ENCODE measurements at regions of chr21 and their contacts with region 1.

Region 1: GRCh38 chr21:35342440-35342839 is 293.3 kb upstream of the RUNX1 start:
- DNase-seq: peak; percentile 66
- H3K4me3 Mint-ChIP-seq: peak overlapping the region; percentile 62
- H3K27ac Mint-ChIP-seq: peak overlapping the region; percentile 98
- H3K4me1 Mint-ChIP-seq: peaks cover 52% of the 10 kb centered on the region
- H3K27me3 Mint-ChIP-seq: no peaks in the 10 kb centered on the region

Region 2: GRCh38 chr21:34807146-34807880 is 535.1 kb before region 1 on chr21:
- CTCF ChIA-PET with region 1: no interaction called
- POLR2A ChIA-PET with region 1: no interaction called
- intact Hi-C with region 1: loop called (anchors 5 kb)
- DNase-seq: peak; percentile 85
- H3K4me3 Mint-ChIP-seq: peak overlapping the region; percentile 57
- H3K27ac Mint-ChIP-seq: peak overlapping the region; percentile 89
- H3K4me1 Mint-ChIP-seq: peaks cover 89% of the 10 kb centered on the region
- H3K27me3 Mint-ChIP-seq: no peaks in the 10 kb centered on the region

Region 3: GRCh38 chr21:35084869-35085268 is 257.6 kb before region 1 on chr21:
- CTCF ChIA-PET with region 1: no interaction called
- POLR2A ChIA-PET with region 1: no interaction called
- intact Hi-C with region 1: loop called (anchors 1 kb)
- DNase-seq: no peak
- H3K4me3 Mint-ChIP-seq: no peak overlapping the region
- H3K27ac Mint-ChIP-seq: no peak overlapping the region
- H3K4me1 Mint-ChIP-seq: peaks cover 39% of the 10 kb centered on the region
- H3K27me3 Mint-ChIP-seq: no peaks in the 10 kb centered on the region

Region 4: GRCh38 chr21:35150562-35151226 is 191.7 kb before region 1 on chr21:
- CTCF ChIA-PET with region 1: no interaction called
- POLR2A ChIA-PET with region 1: interaction called, 3 read pairs
- intact Hi-C with region 1: loop called (anchors 2 kb)
- DNase-seq: no peak
- H3K4me3 Mint-ChIP-seq: peak overlapping the region; percentile 6
- H3K27ac Mint-ChIP-seq: peak overlapping the region; percentile 90
- H3K4me1 Mint-ChIP-seq: peaks cover 51% of the 10 kb centered on the region
- H3K27me3 Mint-ChIP-seq: peaks cover 1% of the 10 kb centered on the region

Region 5: GRCh38 chr21:35244514-35244913 is 97.9 kb before region 1 on chr21:
- CTCF ChIA-PET with region 1: no interaction called
- POLR2A ChIA-PET with region 1: no interaction called
- intact Hi-C with region 1: no loop called
- DNase-seq: no peak
- H3K4me3 Mint-ChIP-seq: no peak overlapping the region
- H3K27ac Mint-ChIP-seq: no peak overlapping the region
- H3K4me1 Mint-ChIP-seq: no peaks in the 10 kb centered on the region
- H3K27me3 Mint-ChIP-seq: peaks cover 2% of the 10 kb centered on the region

Region 6: GRCh38 chr21:35358008-35358407 is 15.6 kb after region 1 on chr21:
- CTCF ChIA-PET with region 1: interaction called, 4 read pairs
- POLR2A ChIA-PET with region 1: no interaction called
- intact Hi-C with region 1: loop called (anchors 1 kb)
- DNase-seq: no peak
- H3K4me3 Mint-ChIP-seq: no peak overlapping the region
- H3K27ac Mint-ChIP-seq: peak overlapping the region; percentile 79
- H3K4me1 Mint-ChIP-seq: peaks cover 11% of the 10 kb centered on the region
- H3K27me3 Mint-ChIP-seq: no peaks in the 10 kb centered on the region

Region 7: DNA sequence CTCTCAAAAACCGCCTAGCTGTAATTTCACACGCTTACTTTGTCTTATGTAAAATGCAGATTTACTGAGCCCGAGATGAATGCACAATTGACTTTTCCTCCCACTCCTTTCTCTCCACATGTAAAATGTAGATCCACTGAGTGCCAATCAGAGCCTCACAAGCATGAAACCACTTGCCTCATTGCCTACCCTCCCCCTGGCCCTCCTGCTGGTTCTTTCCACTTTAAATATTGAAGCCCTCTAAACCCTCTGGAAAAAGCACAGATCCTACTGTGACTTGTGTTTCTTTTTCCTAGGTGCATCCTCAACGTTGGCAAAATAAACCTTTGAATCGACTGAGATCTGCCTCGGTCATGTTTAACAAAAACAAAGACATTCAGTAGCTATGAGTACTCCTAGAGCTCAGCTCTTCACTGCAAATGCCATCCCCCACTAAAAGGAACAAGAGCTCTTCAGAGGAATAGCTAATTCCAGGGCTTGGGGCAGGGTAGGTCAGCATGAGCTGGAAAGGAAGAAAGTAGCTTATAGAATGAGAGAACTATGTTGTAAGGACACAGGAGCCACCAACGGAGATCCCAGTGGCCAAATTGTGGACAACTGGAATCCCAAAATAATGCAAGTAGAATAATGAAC is 72.2 kb after region 1 on chr21:
- CTCF ChIA-PET with region 1: no interaction called
- POLR2A ChIA-PET with region 1: no interaction called
- intact Hi-C with region 1: no loop called
- DNase-seq: no peak
- H3K4me3 Mint-ChIP-seq: no peak overlapping the region
- H3K27ac Mint-ChIP-seq: no peak overlapping the region
- H3K4me1 Mint-ChIP-seq: no peaks in the 10 kb centered on the region
- H3K27me3 Mint-ChIP-seq: peaks cover 27% of the 10 kb centered on the region

Region 8: DNA sequence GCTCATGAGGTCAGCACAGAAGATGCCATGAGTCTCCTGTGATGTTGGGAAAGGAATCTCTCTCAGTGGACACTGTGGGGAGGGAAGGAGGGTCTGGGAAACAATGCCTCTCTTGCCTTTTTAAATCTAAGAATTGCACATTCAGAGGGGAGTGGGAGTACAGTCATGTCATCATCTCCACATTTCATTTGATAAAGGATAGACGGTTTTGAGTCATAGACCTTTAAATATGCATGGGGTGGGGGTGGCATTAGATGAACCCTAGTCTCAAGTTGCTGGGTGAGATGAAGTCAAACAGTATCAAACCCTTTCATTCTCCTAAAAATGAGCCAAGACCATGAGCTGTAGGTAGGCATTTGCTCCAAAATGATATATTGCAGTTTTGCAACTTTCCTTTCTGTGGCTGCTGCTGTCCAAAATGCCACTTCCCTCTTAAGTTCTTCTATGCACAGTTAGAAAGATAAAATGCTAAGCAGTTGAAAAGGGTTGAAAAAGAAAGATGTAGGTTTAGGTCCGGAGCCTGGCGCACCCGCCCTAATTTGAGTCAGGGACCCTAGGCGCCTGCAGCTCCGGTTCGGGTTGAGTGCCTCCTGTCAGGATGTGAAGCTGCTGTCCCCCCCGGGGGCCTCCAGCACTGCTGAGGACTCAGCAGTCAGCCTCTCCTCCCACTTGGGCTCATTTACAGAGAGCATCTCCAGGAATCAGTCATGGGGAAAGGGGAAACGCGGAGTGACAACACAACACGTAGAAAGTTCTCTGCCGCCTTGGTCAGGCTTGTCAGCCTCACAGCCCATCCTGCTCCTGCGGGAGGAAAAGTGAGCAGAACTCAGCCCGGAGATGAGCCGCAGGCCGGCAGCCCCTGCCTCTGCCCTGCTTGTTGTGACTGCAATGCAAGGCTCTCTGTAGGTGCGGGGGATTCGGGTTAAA is 185.9 kb after region 1 on chr21:
- CTCF ChIA-PET with region 1: no interaction called
- POLR2A ChIA-PET with region 1: no interaction called
- intact Hi-C with region 1: loop called (anchors 2 kb)
- DNase-seq: peak; percentile 78
- H3K4me3 Mint-ChIP-seq: peak overlapping the region; percentile 80
- H3K27ac Mint-ChIP-seq: peak overlapping the region; percentile 84
- H3K4me1 Mint-ChIP-seq: peaks cover 48% of the 10 kb centered on the region
- H3K27me3 Mint-ChIP-seq: no peaks in the 10 kb centered on the region

Measured in activated CD4-positive, alpha-beta memory T cell treated with anti-CD3 and anti-CD28 coated beads for 36 hours (primary cell).